ENCODE measurements at regions of chr5 and their contacts with region 1.

Region 1: GRCh38 chr5:176537608-176538504 is 654 bp upstream of the RNF44 start:
- DNase-seq: peak; percentile 97 to 100 (median 99)

Region 2: DNA sequence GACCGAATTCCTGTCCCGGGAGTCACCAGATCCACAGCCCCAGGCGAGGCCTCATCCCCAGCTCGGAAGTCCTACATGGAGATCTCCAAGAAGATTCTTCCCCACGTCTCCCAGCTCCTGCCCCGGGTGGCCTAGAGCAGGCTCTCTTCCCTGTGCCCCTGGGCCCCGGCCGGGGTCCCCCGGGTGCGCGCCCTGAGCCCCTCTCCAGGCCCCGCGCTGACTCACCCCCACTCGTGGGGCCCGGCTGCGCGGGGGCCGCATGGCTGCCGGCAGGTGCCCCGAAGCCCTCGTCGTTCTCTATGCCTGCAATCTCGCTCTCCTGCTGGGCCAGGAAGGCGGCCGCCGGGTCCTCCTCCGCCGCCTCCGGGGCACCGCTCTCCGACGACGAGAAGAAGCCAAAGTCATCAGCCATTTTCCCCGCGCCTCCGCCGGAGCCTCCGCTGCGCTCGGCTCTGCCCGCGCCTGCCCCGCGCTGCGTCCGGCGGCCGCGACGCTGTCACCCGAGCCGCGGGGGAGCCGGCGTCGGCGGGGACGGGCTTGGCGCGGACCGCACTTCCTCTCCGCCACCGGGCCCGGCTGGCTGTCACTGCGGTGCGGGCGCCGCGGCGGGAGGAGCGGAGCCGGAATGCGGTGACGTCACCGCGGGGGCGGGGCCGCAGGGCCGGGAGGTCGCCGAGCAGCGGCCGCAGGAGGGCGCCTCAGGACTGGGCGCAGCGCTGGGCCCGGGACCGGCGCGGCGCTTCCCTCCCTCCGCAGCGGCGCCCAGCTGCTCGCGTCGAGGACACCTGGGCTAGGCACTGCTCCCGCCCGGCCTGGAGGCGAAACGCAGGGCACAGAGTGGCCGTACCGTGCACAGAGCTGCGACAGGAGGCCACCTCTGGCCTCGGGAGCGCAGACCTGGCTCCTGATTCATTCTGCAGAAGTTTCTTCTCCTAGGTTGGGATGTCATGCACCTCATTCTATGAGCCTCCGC is 121.6 kb before region 1 on chr5 and contains the start of gene CLTB:
- intact Hi-C with region 1: loop called (anchors 10 kb)
- DNase-seq: peak; percentile 60 to 98 (median 93)

Region 3: DNA sequence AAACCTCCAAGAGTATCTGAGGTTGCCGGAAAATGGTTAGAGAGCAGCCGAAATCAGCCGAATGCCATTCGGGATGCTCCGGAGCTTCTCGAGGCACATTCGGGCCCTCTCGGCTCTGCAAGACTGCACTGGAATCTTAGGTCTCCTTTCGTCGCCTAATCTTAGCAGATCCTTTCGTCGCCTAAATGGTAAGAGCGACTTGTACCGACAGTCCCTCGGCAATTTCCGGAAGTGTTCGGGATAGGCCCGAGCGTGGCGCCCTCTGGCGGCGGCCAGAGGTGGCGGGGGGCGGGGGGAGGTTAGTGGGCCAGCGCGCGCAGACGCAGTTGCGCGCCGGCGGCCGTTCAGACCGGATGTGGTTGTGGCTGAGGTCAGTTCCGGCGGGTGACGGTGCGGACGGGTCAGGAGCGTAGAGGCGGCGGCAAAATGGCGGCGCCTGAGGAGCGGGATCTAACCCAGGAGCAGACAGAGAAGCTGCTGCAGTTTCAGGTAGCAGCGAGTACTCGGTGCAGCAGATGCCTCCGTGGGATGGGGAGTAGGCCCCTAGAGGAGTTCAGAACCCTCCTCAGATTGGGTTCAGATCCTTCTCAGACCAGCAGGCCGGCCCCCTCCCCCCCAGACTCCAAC is 89.8 kb before region 1 on chr5 and contains the start of gene FAF2:
- intact Hi-C with region 1: loop called (anchors 2 kb)
- DNase-seq: peak; percentile 86 to 98 (median 95)

Region 4: DNA sequence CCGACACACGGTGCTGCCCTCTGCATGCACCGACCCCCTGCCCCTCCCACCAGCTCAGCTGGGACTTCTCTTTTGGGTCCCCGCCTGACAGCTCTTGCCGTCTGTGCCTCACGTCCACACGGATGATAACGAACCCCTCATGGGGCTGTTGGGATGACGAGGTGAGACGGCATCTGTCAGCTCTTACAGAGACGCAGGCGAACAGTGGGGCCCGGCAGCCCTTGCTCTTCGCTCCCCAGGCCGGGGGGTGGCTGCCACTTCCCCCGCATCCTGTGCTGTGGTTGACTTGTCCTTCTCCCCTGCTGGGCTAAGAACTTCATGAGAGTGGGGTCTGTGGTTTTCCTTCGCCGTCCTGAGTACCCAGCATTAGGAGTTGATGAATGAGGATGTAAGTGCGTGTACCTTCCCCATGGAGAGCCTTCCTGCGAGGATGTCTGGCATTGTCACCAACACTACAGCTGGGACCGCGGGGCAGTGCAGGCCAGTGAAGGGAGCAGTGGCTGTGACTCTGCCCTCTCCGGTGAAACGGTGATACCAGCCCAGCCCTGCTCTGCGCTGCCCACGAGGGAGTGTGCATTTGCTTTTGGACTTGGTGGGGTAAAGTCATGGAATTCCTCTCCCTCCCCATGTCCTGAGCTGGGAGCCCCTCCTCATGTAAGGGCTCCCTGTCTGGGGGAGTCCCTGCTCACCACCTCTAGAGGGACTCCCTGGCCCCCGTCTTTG is 338.1 kb after region 1 on chr5:
- intact Hi-C with region 1: no loop called
- DNase-seq: no peak

Measured in head of caudate nucleus (tissue), 42 donors.